OCI-LY7 (cell line): ENCODE measurements at regions of chr7 and their contacts with region 1.

Region 1: DNA sequence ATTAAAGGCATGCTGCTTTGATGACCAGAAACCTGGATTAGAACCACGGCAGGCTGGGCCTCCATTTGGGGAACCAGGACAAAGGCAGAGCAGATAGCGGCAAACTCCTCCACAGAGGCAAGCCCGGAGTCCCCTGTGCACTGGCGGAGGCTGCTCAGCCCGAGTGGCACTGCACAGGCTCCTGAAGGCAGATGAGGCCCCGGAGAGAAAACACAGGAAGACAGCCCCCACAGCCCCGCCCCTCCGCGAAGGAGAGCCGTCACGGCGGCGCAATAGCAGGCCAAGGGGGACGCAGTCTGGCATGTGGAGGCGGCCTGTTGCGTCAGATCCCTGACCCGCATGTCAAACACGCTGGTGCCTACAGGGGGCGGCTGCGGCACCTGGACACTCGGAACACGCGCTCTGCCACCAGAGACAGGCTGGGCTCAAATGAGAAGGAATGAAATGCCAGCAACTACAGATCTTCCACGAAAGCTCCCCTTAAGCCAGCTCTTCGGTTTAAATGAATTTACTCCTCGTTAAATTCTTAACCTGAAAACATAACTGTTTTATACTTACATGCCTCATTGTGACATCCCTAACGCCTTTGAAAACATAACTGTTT is 128.5 kb downstream of the MAD1L1 start:
- DNase-seq: peak; percentile 85
- H3K4me3 ChIP-seq: peak overlapping the region; percentile 2
- H3K27ac ChIP-seq: peak overlapping the region; percentile 48
- H3K4me1 ChIP-seq: peaks cover 62% of the 10 kb centered on the region
- CTCF ChIP-seq: peak; percentile 74

Region 2: DNA sequence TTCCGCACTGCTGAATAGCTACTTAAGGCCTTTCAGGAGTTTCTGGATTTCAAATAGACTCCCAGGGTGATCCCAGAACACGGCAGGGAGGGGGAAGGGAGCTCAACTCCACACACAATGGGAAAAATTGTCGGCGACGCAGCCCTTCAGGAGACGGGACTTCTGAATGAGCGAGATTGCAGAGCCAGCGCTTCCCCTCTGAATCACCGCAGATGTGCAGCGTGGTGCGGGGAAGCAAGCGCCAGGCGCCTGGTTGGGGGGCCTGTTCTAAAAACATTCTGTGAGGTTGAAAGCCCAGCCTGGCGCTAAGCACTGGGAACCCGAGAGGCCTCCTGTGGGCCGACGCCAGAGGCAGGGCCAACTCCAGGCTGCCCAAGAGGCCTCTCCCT is 34.7 kb before region 1 on chr7:
- CTCF ChIA-PET with region 1: no interaction called
- POLR2A ChIA-PET with region 1: interaction called, 3 read pairs
- intact Hi-C with region 1: loop called (anchors 5 kb)
- DNase-seq: peak; percentile 11
- H3K4me3 ChIP-seq: no peak overlapping the region
- H3K27ac ChIP-seq: peak overlapping the region; percentile 24
- H3K4me1 ChIP-seq: peaks cover 54% of the 10 kb centered on the region
- CTCF ChIP-seq: no peak

Region 3: DNA sequence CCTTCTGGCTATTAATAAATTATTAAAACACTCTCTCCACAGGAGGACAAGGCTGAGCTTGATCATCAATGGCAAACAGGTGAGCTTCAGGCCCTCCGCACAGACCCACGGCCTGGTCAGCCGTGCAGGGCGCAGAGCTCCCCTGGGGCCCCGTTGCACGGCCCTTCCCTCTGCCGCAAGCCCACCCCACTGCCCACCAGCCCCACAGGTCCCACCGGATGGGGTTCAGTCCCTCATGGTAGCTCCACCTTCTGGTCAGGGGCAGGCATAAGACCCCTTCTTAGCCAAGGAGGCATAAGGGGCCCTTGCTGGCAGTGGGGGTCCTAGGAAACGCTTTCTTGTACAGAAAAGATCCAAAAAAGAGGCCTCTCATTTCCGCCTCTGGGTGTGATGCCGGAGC is 44.0 kb after region 1 on chr7:
- CTCF ChIA-PET with region 1: no interaction called
- POLR2A ChIA-PET with region 1: no interaction called
- intact Hi-C with region 1: loop called (anchors 2 kb)
- DNase-seq: no peak
- H3K4me3 ChIP-seq: no peak overlapping the region
- H3K27ac ChIP-seq: no peak overlapping the region
- H3K4me1 ChIP-seq: no peaks in the 10 kb centered on the region
- CTCF ChIP-seq: peak; percentile 64

Region 4: DNA sequence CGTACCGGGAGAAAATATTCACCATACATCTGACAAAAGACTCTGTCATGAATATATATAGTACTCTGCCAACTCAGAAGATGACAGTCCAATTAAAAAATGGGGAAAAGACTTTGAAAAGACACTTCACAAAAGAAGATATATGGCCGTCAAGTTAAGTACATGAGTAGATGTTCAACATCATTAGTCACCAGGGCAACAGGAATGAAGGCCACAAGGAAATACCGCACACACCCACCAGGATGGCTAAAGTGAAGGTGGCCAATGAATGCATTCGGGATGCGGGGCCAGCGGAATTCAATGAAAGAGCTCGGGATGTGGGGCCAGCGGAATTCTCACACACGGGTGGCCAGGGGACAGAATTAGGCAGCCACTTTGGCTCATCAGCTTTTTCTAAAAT is 86.3 kb after region 1 on chr7:
- CTCF ChIA-PET with region 1: no interaction called
- POLR2A ChIA-PET with region 1: no interaction called
- intact Hi-C with region 1: loop called (anchors 5 kb)
- DNase-seq: no peak
- H3K4me3 ChIP-seq: no peak overlapping the region
- H3K27ac ChIP-seq: no peak overlapping the region
- H3K4me1 ChIP-seq: no peaks in the 10 kb centered on the region
- CTCF ChIP-seq: no peak

Region 5: GRCh38 chr7:2209146-2209960 is 105.1 kb after region 1 on chr7:
- CTCF ChIA-PET with region 1: interaction called, 3 read pairs
- POLR2A ChIA-PET with region 1: no interaction called
- intact Hi-C with region 1: loop called (anchors 1 kb)
- DNase-seq: peak; percentile 67
- H3K4me3 ChIP-seq: no peak overlapping the region
- H3K27ac ChIP-seq: no peak overlapping the region
- H3K4me1 ChIP-seq: peaks cover under 1% of the 10 kb centered on the region
- CTCF ChIP-seq: peak; percentile 78